Activated CD4-positive, alpha-beta T cell treated with anti-CD3 and anti-CD28 coated beads for 36 hours (primary cell): ENCODE measurements at regions of chr15 and their contacts with region 1.

Region 1: DNA sequence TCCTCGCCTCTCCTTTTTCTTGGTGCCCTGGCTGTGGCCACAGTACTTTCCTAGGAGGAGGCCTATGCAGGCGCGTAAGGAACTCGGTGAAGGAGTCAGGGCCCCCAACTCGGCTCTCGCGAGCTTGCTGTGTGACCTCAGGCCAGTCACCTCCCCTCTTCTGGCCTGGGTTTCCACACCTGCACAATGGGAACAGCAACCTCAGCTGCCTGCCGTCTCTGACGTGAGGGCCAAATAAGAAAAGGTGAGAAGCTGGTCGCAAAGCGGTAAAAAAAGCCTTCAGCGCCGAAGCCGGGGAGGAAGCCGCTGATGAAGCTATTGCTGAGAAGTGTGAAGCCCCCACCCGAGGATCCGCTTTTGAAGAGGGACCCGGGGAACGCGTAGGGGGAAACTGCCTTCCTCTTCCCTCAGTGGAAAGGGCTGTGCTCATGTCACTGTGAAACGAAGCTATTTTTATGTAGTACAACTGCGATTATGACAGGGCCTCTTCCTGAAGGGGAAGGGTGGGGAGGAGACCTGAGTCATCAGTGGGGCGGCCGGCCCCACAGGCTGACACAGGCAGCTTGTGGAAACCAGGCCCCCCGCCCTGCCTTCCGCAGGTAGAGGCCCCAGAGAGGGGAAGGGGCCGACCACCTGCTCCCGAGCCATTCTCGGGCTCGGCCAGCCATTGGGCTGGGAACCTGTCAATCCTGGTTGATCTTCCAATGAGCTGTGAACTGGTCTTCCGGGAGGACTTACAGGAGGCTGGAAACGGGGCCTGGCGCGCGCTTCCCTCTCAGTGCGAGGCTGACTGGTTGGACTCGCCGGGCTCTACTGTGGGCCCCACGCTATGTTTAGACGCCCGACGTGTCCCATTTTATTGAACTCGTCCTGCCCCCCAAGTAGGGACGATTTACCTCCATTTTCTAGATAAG is 18.0 kb upstream of the ANKDD1A start:
- DNase-seq: peak; percentile 99
- ATAC-seq: peak; percentile 84
- H3K4me3 Mint-ChIP-seq: peak overlapping the region; percentile 94
- H3K27ac Mint-ChIP-seq: peak overlapping the region; percentile 93
- H3K4me1 Mint-ChIP-seq: peaks cover 54% of the 10 kb centered on the region
- H3K27me3 Mint-ChIP-seq: no peaks in the 10 kb centered on the region

Region 2: DNA sequence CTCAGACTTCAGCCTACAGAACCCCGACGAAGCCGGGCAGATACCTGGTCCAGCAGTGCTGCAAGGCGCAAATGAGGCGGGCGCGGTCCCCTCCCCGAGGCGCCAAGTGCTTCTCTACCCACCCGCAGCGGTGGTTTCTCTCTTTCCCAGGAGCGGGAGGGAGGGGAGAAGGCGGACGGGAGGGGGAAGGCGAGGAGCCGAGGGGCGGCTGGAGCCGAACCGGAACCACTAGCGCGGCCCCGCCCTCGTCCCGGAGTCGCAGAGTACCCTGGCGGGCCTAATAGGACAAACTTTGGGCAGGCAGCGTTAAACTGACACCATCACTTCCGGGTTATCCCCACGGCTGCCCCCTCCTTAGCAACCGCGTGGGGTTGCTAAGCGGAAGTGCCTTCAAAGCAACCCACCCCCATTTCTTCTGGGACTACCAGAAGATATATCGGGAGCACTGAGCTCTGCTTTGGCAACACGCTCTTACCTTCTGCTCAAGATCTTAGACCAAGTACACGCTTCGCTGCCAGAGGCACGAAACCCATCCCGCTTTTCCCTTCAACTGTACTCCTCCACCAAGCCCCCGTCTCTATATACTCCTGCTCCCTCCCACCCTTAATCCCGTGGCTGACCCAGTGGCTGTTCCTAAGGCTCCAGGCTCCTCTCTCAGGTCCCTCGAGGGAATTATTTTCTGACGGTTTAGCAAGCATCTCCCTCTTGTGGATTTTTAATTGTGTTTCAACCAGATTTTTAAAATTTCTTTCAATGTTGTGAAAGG is 537.6 kb before region 1 on chr15 and contains the start of gene CSNK1G1:
- CTCF ChIA-PET with region 1: no interaction called
- POLR2A ChIA-PET with region 1: no interaction called
- intact Hi-C with region 1: loop called in 1 of 2 experiments (anchors 1 kb)
- DNase-seq: peak; percentile 94
- ATAC-seq: peak; percentile 99
- H3K4me3 Mint-ChIP-seq: peak within 1 kb of the TSS; percentile 89
- H3K27ac Mint-ChIP-seq: peak within 1 kb of the TSS; percentile 84
- H3K4me1 Mint-ChIP-seq: peaks cover 17% of the 10 kb centered on the region
- H3K27me3 Mint-ChIP-seq: no peaks in the 10 kb centered on the region
- total RNA-seq, gene CSNK1G1: 20.3 to 22.5 TPM

Region 3: DNA sequence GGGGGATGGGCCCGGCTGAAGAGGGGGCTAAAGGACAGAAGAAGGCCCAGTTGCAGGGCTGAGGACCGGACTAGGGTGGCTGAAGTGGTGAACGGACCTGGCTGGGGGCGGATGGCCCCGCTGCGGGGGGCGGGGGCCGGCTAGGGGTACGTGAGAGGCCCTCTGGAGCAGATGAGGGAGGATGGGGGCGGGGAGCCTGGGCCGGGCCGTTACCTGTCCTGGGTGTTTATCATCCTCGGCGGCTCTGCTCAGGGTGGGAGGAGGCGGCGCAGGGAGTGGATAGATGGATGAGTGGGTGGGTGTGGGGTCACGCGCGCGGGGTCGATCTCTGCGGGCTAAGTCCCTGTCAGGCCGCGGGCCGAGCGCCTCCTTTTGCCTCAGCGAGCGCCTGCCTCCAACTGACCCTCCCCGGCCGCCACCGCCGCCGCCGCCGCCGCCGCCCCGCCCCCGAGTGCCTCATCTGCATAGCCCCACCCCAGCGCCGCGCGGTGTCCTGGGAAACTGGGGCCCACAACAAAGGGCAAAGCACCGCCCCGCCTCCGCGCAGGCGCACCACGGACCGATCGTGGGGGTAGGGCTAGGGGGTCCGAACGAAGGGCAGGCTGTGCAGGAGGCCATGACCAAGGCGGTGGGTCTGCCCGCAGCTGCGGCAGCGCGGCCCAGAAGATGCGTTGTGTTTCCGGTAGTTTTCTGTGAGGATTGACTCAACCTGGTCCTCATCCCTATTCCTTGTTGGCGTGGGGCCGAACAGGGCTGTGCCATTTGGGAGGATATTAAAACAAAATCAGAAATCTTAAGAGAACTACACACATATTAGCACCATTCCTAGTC is 190.7 kb before region 1 on chr15:
- CTCF ChIA-PET with region 1: no interaction called
- POLR2A ChIA-PET with region 1: interaction called, 5 read pairs
- intact Hi-C with region 1: loop called in 1 of 2 experiments (anchors 1 kb)
- DNase-seq: peak; percentile 98
- ATAC-seq: peak; percentile 91
- H3K4me3 Mint-ChIP-seq: peak overlapping the region; percentile 72
- H3K27ac Mint-ChIP-seq: peak overlapping the region; percentile 86
- H3K4me1 Mint-ChIP-seq: peaks cover 52% of the 10 kb centered on the region
- H3K27me3 Mint-ChIP-seq: no peaks in the 10 kb centered on the region

Region 4: DNA sequence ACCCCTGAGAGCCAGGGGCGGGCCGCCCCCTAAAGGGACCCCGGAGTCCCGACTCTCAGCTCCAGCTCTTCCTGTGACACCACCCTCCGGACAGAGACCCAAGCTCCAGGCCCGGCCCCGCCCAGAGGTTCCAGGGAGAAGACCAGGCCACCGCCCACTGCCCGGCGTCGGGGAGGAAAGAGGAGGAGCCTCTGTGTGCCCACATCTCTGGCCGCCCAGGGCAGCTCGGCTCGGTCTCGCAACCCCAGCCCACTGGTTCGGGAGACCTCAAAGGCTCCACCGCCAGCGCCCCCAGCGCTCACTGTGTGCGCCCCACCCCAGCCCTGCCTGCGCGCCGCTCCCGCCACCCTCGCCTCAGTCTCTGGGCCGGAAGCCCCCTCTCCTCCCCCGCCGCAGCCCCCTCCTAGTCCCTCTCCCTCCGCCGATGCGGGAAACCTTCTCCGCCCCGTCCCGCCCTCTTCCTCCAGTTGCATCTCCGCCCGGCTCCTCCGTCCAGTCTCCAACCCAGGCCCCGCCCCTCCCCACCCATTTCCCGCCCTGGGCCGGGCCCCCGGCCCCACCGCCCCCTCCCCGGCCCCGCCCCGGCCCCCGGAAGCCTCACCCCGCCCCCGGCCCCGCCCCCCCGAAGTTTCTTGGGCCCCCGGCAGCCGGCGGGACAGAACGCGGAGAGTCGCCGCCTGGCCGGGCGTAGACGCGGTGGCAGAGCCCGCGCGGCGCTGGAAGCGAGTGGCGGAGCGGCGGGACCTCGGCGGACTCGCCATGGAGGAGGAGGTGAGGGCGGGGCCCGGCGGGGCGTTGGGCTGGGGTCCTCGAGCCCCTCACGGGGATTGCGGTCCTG is 52.3 kb before region 1 on chr15 and contains the start of gene PLEKHO2:
- CTCF ChIA-PET with region 1: interaction called, 10 read pairs
- POLR2A ChIA-PET with region 1: interaction called, 15 read pairs
- intact Hi-C with region 1: loop called (anchors 1 to 2 kb)
- DNase-seq: peak; percentile 94
- ATAC-seq: peak; percentile 73
- H3K4me3 Mint-ChIP-seq: peak within 1 kb of the TSS; percentile 88
- H3K27ac Mint-ChIP-seq: peak within 1 kb of the TSS; percentile 84
- H3K4me1 Mint-ChIP-seq: peaks cover 66% of the 10 kb centered on the region
- H3K27me3 Mint-ChIP-seq: no peaks in the 10 kb centered on the region
- total RNA-seq, gene PLEKHO2: 11.4 to 13.3 TPM

Region 5: DNA sequence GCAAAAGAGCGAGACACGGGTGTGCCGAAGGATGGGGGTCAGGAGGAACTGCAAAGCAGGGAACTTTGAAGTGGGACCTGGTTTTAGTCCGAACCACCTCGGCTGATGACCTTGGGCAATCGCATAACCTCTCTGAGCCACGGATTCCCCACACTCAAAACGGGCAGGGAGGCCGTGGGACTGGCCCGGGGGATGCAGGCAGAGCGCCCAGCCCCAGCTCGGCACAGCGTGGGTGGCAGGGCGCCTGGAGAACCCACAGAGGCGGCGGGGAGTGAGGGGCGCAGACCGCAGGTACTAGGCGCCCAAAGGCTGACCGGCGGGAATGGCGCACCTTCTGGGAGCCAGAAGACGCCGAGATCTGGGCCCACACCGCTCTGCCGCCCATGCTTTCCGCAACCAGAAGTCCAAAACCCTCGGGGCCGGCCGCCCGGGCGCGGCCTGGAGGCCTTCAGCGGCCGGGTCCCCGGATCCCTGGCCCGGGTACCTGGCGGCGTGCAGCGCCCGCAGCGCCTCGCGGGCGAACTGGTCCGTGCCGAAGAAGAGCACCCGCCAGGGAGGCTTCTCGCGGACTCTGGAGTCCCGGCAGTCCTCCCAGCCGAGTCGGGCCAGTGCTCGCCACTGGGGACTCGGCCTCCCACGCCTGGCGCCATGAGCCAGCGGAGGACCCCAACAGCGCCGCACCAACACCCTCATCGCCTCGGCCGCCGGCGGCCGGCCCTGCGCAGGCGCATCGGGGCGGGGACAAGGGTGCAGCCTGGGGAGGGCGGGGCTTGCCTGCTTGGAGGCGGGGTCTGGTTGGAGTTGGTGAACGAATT is 135.4 kb after region 1 on chr15 and contains the start of gene MTFMT:
- CTCF ChIA-PET with region 1: no interaction called
- POLR2A ChIA-PET with region 1: no interaction called
- intact Hi-C with region 1: loop called in 1 of 2 experiments (anchors 1 kb)
- DNase-seq: peak; percentile 96
- ATAC-seq: peak; percentile 95
- H3K4me3 Mint-ChIP-seq: peak within 1 kb of the TSS; percentile 85
- H3K27ac Mint-ChIP-seq: peak within 1 kb of the TSS; percentile 79
- H3K4me1 Mint-ChIP-seq: peaks cover 20% of the 10 kb centered on the region
- H3K27me3 Mint-ChIP-seq: no peaks in the 10 kb centered on the region
- total RNA-seq, gene MTFMT: 19.0 to 19.9 TPM